ENCODE measurements at regions of chr22 and their contacts with region 1.

Region 1: DNA sequence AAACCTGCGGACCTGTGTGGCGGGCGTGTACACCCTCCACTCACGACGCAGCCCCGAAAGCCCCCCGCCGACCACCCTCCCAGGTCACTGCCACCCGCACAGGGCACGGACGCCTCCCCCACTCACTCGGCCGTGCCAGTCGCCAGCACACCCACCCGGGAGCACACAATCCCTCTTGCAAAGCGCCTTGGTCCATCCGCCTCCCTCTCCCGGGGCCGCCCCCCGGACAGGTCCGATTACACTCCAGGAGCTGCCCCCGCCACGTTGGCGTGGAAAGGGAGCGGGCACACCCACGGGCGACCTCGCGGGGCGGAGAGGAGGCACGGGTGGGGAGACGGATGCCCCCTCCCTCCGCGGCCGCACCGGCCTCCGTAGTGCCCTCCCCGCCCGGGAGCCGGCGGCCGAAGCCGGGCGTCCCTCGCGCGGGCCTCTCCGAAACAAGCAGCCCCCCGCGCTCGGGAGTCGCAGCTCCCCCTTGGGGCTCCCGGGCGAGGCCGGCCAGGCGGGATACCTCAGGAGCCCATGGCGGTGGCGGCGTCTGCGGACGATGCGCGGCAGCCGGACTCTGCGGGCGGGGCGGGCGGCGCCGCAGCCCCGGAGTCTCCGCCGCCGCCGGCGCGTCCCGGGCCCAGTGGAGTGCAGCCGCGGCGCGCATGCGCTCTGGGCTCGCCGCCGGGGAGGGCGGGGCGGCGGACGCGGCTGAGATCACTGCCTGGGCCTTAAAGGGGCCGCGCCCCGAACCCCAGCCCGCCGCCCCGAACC is at the start of gene TMEM184B:
- DNase-seq: peak; percentile 76 to 92 (median 86)
- ATAC-seq: peak; percentile 43 to 95 (median 90)
- H3K4me3 ChIP-seq: peak within 1 kb of the TSS; percentile 71 to 100 (median 95)
- H3K27ac ChIP-seq: peak within 1 kb of the TSS; percentile 92 to 99 (median 98)
- H3K4me1 ChIP-seq: peaks cover 3 to 58% (median 47%) of the 10 kb centered on the region in 12 donors
- H3K27me3 ChIP-seq: no peaks in the 10 kb centered on the region
- CTCF ChIP-seq: peak in 1 of 12 donors; percentile 6
- POLR2A ChIP-seq: peak; percentile 69 to 94
- total RNA-seq, gene TMEM184B: 37.6 to 103 (median 47.0) TPM

Region 2: GRCh38 chr22:38201710-38202436 is 70.7 kb before region 1 on chr22 and contains the start of gene MAFF:
- intact Hi-C with region 1: loop called in 2 of 10 experiments (anchors 5 kb)
- DNase-seq: peak; percentile 96 to 98 (median 97)
- ATAC-seq: peak; percentile 69 to 88 (median 86)
- H3K4me3 ChIP-seq: peak within 1 kb of the TSS; percentile 73 to 98 (median 80)
- H3K27ac ChIP-seq: peak within 1 kb of the TSS; percentile 95 to 100 (median 98)
- H3K4me1 ChIP-seq: peaks cover 6 to 37% (median 26%) of the 10 kb centered on the region in 12 donors
- H3K27me3 ChIP-seq: no peaks in the 10 kb centered on the region
- CTCF ChIP-seq: no peak
- POLR2A ChIP-seq: peak; percentile 88 to 94
- total RNA-seq, gene MAFF: 1.9 to 35.8 (median 4.0) TPM

Region 3: GRCh38 chr22:38305471-38306448 is 33.2 kb after region 1 on chr22:
- intact Hi-C with region 1: loop called in 6 of 10 experiments (anchors 5 kb)
- DNase-seq: peak in 1 of 5 donors; percentile 47
- ATAC-seq: peak in 2 of 4 donors; percentile 23 to 31
- H3K4me3 ChIP-seq: peak overlapping the region in 3 of 12 donors; percentile 8 to 14 (median 11)
- H3K27ac ChIP-seq: peak overlapping the region; percentile 18 to 100 (median 76)
- H3K4me1 ChIP-seq: peaks cover 18 to 83% (median 74%) of the 10 kb centered on the region in 12 donors
- H3K27me3 ChIP-seq: no peaks in the 10 kb centered on the region
- CTCF ChIP-seq: no peak
- POLR2A ChIP-seq: no peak

Region 4: GRCh38 chr22:38317122-38317994 is 44.8 kb after region 1 on chr22 and contains the start of gene CSNK1E:
- intact Hi-C with region 1: loop called in 8 of 10 experiments (anchors 2 to 5 kb)
- DNase-seq: peak; percentile 86 to 91 (median 88)
- ATAC-seq: peak; percentile 35 to 77 (median 67)
- H3K4me3 ChIP-seq: peak within 1 kb of the TSS; percentile 52 to 98 (median 84)
- H3K27ac ChIP-seq: peak within 1 kb of the TSS; percentile 95 to 100 (median 98)
- H3K4me1 ChIP-seq: peaks cover 10 to 56% (median 44%) of the 10 kb centered on the region in 12 donors
- H3K27me3 ChIP-seq: no peaks in the 10 kb centered on the region
- CTCF ChIP-seq: no peak
- POLR2A ChIP-seq: peak in 1 of 2 donors; percentile 37
- total RNA-seq, gene CSNK1E: 59.7 to 117 (median 72.6) TPM

Region 5: GRCh38 chr22:38890377-38890776 is 617.8 kb after region 1 on chr22:
- intact Hi-C with region 1: no loop called
- DNase-seq: no peak
- ATAC-seq: no peak
- H3K4me3 ChIP-seq: no peak overlapping the region
- H3K27ac ChIP-seq: no peak overlapping the region
- H3K4me1 ChIP-seq: no peaks in the 10 kb centered on the region
- H3K27me3 ChIP-seq: peaks cover 0 to 4% (median 0%) of the 10 kb centered on the region in 9 donors
- CTCF ChIP-seq: no peak
- POLR2A ChIP-seq: no peak